Breast epithelium (tissue), 4 donors: ENCODE measurements at regions of chr10 and their contacts with region 1.

Region 1: DNA sequence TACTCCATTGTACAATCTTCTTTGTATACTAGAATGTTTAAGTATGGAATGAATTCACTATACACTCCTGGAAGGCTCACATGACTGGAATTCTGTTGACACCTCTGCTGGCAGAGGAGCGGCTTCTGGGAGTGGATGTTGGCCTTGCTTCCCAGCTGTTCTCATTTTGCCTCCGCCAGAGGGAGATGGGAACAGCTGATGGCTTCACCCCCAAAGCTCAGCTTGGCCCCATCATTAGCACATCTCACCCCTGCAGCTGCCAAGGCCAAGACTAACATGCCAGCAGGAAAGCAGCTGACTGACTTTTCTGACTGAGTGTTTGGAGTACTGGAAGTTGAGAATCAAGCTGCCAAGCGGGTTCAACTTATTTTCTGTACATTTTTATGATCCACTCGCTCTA is 15.1 kb downstream of the ADAM12 start:
- DNase-seq: no peak
- H3K4me3 ChIP-seq: no peak overlapping the region
- H3K27ac ChIP-seq: no peak overlapping the region
- H3K4me1 ChIP-seq: no peaks in the 10 kb centered on the region
- H3K27me3 ChIP-seq: no peaks in the 10 kb centered on the region
- CTCF ChIP-seq: no peak
- POLR2A ChIP-seq: no peak

Region 2: DNA sequence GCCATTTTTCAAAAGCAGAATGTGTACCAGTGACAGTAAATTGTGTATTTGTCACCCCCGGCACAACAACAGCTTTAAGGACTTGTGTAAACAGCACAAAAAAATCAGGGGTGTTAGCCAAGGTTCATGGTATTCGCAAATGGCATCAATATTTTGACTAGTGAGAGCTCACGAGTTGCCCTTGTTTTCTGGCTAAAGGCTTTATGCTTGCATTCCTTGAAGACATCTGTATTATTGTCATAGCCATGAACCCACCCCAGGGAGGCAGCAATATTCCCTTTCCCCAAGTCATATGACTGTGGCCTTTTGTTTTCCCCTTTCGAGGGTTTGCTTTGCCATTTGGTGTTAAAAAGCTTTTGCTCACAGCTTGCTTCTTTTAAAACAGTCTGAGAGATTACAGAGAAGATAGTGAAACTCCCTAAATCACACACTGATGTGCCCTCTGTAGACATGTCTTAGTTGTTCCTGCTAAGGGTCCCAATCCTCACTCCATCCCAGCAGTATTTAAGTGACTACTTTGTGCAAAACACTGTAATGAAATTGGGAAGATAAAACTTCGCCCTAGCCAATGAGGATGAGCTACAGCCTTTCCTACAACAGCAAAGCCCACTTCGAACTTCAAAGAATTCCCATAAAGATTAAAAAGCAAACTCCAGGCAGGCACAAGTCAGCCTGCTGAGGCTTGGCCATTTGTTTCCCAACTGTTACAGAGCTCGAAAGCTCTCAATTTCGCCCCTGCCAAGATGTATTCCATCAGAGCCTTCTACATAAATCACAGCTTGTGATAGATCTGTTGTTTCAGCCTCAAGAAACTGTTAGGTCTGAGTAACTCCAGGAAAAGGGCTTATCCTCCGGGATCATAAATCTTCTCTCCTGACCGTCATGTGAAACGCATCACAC is 157.2 kb before region 1 on chr10:
- intact Hi-C with region 1: loop called (anchors 5 kb)
- DNase-seq: no peak
- H3K4me3 ChIP-seq: peak overlapping the region in 1 of 3 donors; percentile 8
- H3K27ac ChIP-seq: peak overlapping the region; percentile 34 to 81
- H3K4me1 ChIP-seq: no peaks in the 10 kb centered on the region
- H3K27me3 ChIP-seq: no peaks in the 10 kb centered on the region
- CTCF ChIP-seq: no peak
- POLR2A ChIP-seq: no peak

Region 3: DNA sequence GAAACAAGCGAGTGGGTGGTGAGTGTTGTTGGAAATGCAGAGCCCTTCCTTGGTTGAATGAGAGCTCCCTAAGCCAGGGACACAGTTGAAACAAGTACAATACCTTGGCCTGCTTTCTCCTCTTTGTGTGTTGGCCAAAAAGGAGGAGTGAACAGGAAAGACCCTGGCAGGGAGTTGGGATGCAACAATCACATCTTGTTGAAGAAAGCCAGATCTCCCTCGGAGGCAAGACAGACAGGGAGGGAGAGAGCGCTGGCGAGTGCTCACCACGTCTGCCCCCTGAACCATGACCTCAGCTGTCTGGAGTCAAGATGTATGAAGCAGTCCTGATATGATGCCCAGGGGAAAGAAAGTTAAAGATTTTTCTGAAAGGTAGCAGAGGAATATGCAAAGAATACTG is 51.7 kb before region 1 on chr10:
- intact Hi-C with region 1: no loop called
- DNase-seq: no peak
- H3K4me3 ChIP-seq: no peak overlapping the region
- H3K27ac ChIP-seq: peak overlapping the region in 1 of 2 donors; percentile 29
- H3K4me1 ChIP-seq: no peaks in the 10 kb centered on the region
- H3K27me3 ChIP-seq: no peaks in the 10 kb centered on the region
- CTCF ChIP-seq: no peak
- POLR2A ChIP-seq: no peak

Region 4: GRCh38 chr10:126407846-126408245 is 34.7 kb after region 1 on chr10:
- intact Hi-C with region 1: loop called (anchors 2 kb)
- DNase-seq: no peak
- H3K4me3 ChIP-seq: no peak overlapping the region
- H3K27ac ChIP-seq: no peak overlapping the region
- H3K4me1 ChIP-seq: no peaks in the 10 kb centered on the region
- H3K27me3 ChIP-seq: no peaks in the 10 kb centered on the region
- CTCF ChIP-seq: no peak
- POLR2A ChIP-seq: no peak